Dendritic cell treated with granulocyte-macrophage colony-stimulating factor and Interleukin-4, amounts not matched to agents 40 ng/mL and 50 ng/mL, for 4 days (primary cell): ENCODE measurements at regions of chr1 and their contacts with region 1.

Region 1: GRCh38 chr1:74197657-74198552 is at the starts of genes FPGT and LRRIQ3:
- H3K4me3 Mint-ChIP-seq: peak within 1 kb of the TSS; percentile 88
- H3K27ac Mint-ChIP-seq: peak within 1 kb of the TSS; percentile 91
- H3K4me1 Mint-ChIP-seq: peaks cover 6% of the 10 kb centered on the region
- H3K27me3 Mint-ChIP-seq: peaks cover 5% of the 10 kb centered on the region

Region 2: DNA sequence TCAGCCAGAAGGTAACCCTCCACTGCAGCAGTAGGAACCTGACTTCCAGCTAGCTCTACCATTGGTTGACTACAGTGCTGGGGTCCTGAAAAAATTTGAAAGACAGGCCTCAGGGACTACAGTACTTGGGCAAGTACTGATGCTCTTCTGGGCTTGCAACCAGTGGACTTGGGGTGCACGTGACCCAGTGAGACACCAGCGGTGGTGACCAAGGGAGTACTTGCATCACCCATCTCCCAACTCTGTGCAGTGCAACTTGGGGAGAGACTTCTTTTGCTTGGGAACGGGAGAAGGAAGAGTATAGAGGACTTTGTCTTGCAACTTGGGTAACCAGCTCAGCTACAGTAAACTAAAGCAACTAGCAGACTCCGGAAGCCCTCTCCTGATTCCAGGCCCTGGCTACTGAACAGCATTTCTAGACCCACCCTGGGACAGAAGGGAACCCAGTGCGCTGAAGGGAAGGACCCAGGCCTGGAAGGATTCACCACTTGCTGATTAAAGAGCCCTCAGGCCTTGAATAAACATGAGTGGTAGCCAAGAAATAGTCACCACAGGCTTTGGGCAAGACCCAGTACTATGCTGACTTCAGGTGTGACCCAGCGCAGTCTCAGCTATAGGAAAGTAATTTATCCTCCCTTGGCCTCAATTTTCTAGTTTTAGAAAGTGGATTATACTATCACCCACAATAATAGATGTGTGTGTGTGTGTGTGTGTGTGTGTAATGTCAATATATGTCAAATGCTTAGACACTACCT is 82.9 kb after region 1 on chr1:
- intact Hi-C with region 1: no loop called
- H3K4me3 Mint-ChIP-seq: no peak overlapping the region
- H3K27ac Mint-ChIP-seq: no peak overlapping the region
- H3K4me1 Mint-ChIP-seq: no peaks in the 10 kb centered on the region
- H3K27me3 Mint-ChIP-seq: no peaks in the 10 kb centered on the region

Region 3: GRCh38 chr1:74368335-74368734 is 170.4 kb after region 1 on chr1:
- intact Hi-C with region 1: no loop called
- H3K4me3 Mint-ChIP-seq: no peak overlapping the region
- H3K27ac Mint-ChIP-seq: no peak overlapping the region
- H3K4me1 Mint-ChIP-seq: no peaks in the 10 kb centered on the region
- H3K27me3 Mint-ChIP-seq: no peaks in the 10 kb centered on the region

Region 4: DNA sequence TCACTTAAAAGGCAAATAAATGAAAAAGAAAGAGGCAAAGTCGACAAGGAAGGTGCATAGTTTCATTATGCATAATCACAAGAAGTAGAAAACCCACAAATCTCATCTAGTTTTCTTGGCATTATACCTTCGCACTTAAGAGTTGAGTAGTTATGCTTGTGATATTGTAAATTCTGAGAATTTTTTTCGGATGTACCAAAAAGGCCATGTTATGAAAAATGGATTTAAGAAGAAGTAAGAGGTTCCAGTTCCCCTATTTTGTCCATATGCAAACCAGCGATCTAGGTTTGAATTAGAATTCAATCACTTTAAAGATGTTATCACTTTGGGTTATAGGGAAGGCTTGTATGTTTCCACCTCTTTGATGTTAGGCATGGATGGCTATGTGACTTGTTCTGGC is 483.5 kb after region 1 on chr1:
- intact Hi-C with region 1: loop called (anchors 5 kb)
- H3K4me3 Mint-ChIP-seq: no peak overlapping the region
- H3K27ac Mint-ChIP-seq: no peak overlapping the region
- H3K4me1 Mint-ChIP-seq: peaks cover 42% of the 10 kb centered on the region
- H3K27me3 Mint-ChIP-seq: peaks cover 2% of the 10 kb centered on the region

Region 5: DNA sequence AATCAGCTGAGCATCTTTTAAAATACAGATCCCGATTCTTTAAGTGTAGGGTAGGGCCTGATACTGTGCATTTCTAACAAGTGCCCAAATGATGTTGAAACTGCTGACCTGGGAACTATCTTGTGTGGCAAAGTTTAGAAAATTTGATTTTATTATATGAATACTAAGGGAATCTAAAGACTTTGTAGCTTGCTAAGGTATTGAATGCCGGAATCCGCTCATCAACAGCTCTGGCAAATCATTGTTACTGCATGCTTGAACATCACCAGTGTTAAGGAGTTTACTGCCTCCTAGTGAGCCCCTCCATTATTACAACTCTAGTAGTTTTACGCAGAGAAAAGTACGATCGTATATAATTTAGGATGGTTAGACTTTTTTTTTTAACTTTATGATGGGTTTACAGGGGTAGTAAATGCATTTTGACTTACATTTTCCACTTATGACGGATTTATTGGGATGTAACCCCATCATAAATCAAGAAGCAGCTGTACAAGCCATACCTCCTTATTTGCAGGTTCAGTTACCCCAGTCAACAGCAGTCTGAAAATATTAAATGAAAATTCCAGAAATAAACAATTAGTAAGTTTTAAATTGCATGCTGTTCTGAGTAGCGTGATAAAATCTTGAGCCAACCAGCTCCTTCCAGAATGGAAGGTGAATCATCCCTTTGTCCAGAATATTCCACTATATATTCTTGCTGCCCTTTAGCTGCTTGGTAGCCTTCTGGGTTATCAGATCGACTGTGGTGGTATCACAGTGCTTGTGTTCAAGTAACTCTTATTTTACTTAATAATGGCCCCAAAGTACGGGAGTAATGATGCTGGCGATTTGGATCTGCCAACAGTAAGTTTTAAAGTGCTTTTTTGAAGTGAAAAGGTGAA is 535.9 kb after region 1 on chr1:
- intact Hi-C with region 1: loop called (anchors 5 kb)
- H3K4me3 Mint-ChIP-seq: peak overlapping the region; percentile 89
- H3K27ac Mint-ChIP-seq: peak overlapping the region; percentile 91
- H3K4me1 Mint-ChIP-seq: peaks cover 31% of the 10 kb centered on the region
- H3K27me3 Mint-ChIP-seq: no peaks in the 10 kb centered on the region